ENCODE measurements at regions of chr5 and their contacts with region 1.

Region 1: GRCh38 chr5:134503088-134503946 is 22.2 kb upstream of the JADE2 start:
- DNase-seq: peak; percentile 98
- H3K4me3 ChIP-seq: no peak overlapping the region
- H3K27ac ChIP-seq: peak overlapping the region; percentile 82
- H3K4me1 ChIP-seq: peaks cover 17% of the 10 kb centered on the region
- H3K27me3 ChIP-seq: no peaks in the 10 kb centered on the region
- CTCF ChIP-seq: no peak
- POLR2A ChIP-seq: peak; percentile 51

Region 2: GRCh38 chr5:134370871-134371833 is 132.2 kb before region 1 on chr5 and contains the start of gene UBE2B:
- CTCF ChIA-PET with region 1: interaction called, 3 read pairs
- POLR2A ChIA-PET with region 1: no interaction called
- dilution Hi-C with region 1: no loop called
- intact Hi-C with region 1: loop called (anchors 2 kb)
- DNase-seq: peak; percentile 99
- H3K4me3 ChIP-seq: peak within 1 kb of the TSS; percentile 91 to 94 (median 93)
- H3K27ac ChIP-seq: peak within 1 kb of the TSS; percentile 97
- H3K4me1 ChIP-seq: peaks cover 11% of the 10 kb centered on the region
- H3K27me3 ChIP-seq: no peaks in the 10 kb centered on the region
- CTCF ChIP-seq: no peak
- POLR2A ChIP-seq: peak; percentile 90
- total RNA-seq, gene UBE2B: 109 and 110 TPM in 2 replicates

Region 3: DNA sequence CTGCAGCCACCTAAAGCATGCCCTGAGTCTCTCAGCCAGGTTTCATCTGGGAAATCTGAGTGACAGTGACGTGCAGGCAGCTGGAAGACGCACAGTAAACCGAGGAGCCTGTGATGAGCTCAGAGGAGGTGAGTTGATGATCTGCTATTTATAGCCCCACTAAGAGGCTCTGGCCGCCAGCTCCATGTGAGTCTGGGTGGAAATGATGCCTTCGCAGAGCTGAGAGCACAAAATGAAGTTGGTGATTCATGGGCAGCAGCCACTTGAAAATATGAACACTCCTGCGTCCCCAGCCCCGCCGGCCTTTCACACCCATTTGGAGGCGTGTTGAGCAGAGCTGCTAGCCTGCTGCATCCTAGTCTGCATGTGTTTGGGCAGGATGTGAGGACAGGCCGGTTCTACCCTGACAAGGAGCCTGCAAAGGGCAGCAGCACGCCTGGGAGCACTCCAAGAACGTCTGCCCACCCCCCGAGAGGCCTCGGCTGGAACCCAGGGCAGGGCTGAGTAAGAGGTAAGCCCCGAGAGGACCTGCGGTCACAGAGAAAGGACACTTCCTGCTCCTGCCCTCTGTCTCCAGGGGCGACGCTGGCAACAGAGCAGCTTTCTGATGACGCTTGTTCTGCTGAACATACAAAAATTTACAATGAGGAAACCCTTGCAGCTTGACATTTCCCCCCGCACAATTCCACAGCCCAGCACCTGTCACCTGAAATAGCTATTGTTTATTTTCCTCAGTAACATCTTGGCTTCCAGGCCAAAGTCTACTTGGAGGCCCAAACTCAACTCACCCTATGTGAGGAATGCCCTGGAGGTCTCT is 66.6 kb before region 1 on chr5:
- CTCF ChIA-PET with region 1: no interaction called
- POLR2A ChIA-PET with region 1: no interaction called
- dilution Hi-C with region 1: no loop called
- intact Hi-C with region 1: loop called (anchors 2 kb)
- DNase-seq: peak; percentile 69
- H3K4me3 ChIP-seq: no peak overlapping the region
- H3K27ac ChIP-seq: no peak overlapping the region
- H3K4me1 ChIP-seq: peaks cover 5% of the 10 kb centered on the region
- H3K27me3 ChIP-seq: no peaks in the 10 kb centered on the region
- CTCF ChIP-seq: no peak
- POLR2A ChIP-seq: no peak

Region 4: DNA sequence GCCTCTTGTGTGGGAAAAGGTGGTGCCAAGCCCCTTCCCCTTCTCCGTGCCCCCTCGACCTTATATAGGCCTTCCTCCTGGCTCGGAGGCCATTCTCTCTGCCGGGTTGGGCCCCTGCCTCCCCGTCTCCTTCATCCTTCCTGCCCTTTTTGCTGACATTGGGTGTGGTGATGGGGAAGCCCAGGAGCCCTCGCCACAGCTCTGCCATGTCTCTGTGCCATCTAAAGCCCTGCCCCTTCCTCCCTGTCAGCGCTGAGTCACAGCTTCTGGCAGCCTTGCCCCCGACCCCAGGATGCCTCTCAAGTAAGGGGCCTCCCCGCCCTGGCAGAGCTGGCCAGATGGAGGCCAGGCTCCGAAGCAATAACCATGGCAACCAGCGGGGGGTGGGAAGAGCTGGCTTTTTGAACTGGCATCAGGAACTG is 52.6 kb after region 1 on chr5:
- CTCF ChIA-PET with region 1: interaction called, 3 read pairs
- POLR2A ChIA-PET with region 1: no interaction called
- dilution Hi-C with region 1: no loop called
- intact Hi-C with region 1: loop called (anchors 2 kb)
- DNase-seq: peak; percentile 91
- H3K4me3 ChIP-seq: no peak overlapping the region
- H3K27ac ChIP-seq: peak overlapping the region; percentile 88
- H3K4me1 ChIP-seq: peaks cover 56% of the 10 kb centered on the region
- H3K27me3 ChIP-seq: no peaks in the 10 kb centered on the region
- CTCF ChIP-seq: no peak
- POLR2A ChIP-seq: no peak

Region 5: DNA sequence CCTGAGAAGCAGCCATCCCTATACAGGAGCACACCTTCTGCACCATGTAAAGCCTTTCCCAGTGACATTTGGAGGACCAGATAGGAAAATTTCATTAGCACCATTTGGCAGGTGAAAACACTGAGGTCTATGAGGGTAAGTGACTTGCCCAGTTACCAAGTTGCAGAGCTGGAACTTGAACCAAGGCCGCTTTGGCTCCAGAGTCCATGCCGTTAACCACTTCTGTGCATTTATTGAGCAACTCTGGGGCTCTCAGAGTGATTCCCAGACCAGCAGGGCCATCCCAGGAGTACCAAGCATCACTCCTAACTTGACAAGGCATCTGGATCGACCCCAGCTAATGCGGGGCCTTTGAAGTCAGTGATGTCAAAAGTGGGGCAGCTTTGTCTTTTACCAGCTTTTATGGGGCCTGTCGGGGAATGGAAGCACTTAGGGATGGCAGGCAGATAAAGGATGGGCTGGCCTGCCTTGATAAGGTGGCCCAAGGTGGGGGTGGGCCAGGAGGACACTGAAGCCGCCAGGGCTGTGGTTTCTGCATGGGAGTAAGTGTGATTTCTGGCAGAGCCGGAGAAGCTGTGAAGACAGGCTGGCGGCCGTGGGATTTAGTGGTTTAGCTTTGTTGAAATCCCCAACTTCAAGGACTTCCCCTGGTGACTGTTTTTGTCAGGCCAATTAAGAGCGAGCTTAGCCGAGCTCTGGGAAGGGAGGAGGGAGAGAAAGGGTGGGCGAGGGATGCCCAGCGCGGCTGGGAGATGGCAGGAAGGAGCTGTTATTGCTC is 768.4 kb after region 1 on chr5:
- CTCF ChIA-PET with region 1: no interaction called
- POLR2A ChIA-PET with region 1: no interaction called
- dilution Hi-C with region 1: no loop called
- intact Hi-C with region 1: no loop called
- DNase-seq: no peak
- H3K4me3 ChIP-seq: no peak overlapping the region
- H3K27ac ChIP-seq: no peak overlapping the region
- H3K4me1 ChIP-seq: peaks cover 16% of the 10 kb centered on the region
- H3K27me3 ChIP-seq: no peaks in the 10 kb centered on the region
- CTCF ChIP-seq: no peak
- POLR2A ChIP-seq: no peak